Activated naive CD4-positive, alpha-beta T cell treated with anti-CD3 and anti-CD28 coated beads for 36 hours (primary cell): ENCODE measurements at regions of chr2 and their contacts with region 1.

Region 1: GRCh38 chr2:39436592-39437510 is at the start of gene MAP4K3:
- DNase-seq: peak; percentile 86
- H3K4me3 Mint-ChIP-seq: peak within 1 kb of the TSS; percentile 87
- H3K27ac Mint-ChIP-seq: peak within 1 kb of the TSS; percentile 83
- H3K4me1 Mint-ChIP-seq: peaks cover 66% of the 10 kb centered on the region
- H3K27me3 Mint-ChIP-seq: no peaks in the 10 kb centered on the region
- total RNA-seq, gene MAP4K3: 10.6 to 12.0 TPM

Region 2: GRCh38 chr2:39099870-39100728 is 336.8 kb before region 1 on chr2:
- CTCF ChIA-PET with region 1: no interaction called
- intact Hi-C with region 1: loop called (anchors 2 kb)
- DNase-seq: peak; percentile 38
- H3K4me3 Mint-ChIP-seq: no peak overlapping the region
- H3K27ac Mint-ChIP-seq: peak overlapping the region; percentile 75
- H3K4me1 Mint-ChIP-seq: peaks cover 47% of the 10 kb centered on the region
- H3K27me3 Mint-ChIP-seq: no peaks in the 10 kb centered on the region

Region 3: DNA sequence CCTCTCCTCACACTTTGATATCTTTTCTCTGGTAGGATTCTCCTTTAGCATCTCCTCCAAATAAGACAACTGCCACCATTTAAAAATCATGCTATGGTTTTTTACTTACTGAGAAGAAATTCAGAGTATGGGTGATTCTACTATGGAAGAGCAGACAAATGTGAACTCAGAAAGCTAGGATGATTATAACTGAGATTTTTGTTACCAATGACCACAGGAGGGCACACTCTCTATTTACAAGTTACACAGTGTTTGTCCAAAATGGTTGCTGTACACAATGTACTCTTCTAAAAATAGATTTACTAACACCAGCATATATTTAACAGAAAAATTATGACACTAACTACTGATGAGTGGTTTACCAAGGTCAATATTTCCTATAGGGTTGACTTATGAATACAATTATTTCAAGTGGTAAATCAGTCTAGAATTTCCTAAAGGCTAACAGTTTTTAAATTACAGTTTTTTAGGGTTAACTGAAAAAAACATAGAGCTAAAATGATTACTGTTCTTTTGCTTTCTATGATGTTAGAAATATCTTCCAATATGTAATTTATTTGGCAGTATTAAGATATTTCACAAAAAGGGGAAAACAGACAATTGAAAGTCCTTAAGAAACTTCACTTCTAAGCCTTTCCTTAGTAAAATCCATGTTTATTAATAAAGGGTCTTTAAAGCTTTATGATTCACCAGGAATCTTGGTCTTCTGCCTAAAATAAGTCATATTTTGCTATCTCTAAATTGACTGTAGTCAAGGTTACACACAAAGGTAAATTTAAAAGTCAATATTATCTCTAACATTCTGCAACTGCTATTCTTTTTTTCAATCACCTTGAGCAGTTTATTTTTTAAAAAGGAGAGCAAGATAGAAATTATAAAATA is 57.0 kb before region 1 on chr2:
- CTCF ChIA-PET with region 1: interaction called, 9 read pairs
- intact Hi-C with region 1: loop called (anchors 1 kb)
- DNase-seq: no peak
- H3K4me3 Mint-ChIP-seq: no peak overlapping the region
- H3K27ac Mint-ChIP-seq: no peak overlapping the region
- H3K4me1 Mint-ChIP-seq: peaks cover 19% of the 10 kb centered on the region
- H3K27me3 Mint-ChIP-seq: no peaks in the 10 kb centered on the region

Region 4: GRCh38 chr2:39469807-39470206 is 33.0 kb after region 1 on chr2:
- CTCF ChIA-PET with region 1: no interaction called
- intact Hi-C with region 1: loop called (anchors 1 kb)
- DNase-seq: peak; percentile 39
- H3K4me3 Mint-ChIP-seq: no peak overlapping the region
- H3K27ac Mint-ChIP-seq: no peak overlapping the region
- H3K4me1 Mint-ChIP-seq: peaks cover 34% of the 10 kb centered on the region
- H3K27me3 Mint-ChIP-seq: no peaks in the 10 kb centered on the region